AG04450 (cell line): ENCODE measurements at regions of chr1 and their contacts with region 1.

Region 1: DNA sequence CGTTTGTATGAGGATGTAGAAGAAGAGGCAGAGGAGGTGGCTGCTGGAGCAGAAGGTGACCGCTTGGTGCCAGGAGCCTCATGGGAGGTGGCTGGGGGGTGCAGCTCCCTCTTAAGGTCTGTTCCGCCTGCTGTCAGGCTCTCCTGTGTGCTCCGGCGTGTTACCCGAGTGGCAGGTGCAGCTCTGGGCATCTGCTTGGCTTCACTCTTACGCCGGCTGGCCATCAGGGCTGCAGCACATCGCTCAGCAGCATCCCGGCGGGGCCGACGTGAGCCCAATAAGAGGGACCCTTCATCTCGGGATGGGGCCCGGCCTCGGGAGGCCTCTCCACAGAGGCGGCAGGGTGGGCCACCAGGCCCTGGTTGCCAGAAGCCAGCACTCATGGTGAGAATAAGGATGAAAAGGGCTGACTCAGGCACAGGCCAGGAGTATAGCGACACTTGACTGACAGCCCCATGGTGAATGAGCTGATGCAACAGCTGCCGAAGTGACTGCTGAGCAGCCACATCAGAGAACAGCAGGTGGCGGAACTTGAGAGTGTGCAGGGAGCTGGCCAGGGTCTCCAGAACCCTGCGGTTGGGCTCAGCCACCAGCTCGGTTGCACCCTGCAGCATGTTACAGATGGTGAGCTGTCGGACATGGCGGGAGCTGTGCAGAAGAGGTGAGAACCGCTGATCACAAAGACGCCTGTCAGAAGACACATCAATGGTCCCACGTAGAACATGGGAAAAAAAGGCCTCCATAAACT is 17.5 kb downstream of the LRRC41 start:
- DNase-seq: no peak
- H3K4me3 ChIP-seq: no peak overlapping the region
- H3K27ac ChIP-seq: no peak overlapping the region
- H3K27me3 ChIP-seq: no peaks in the 10 kb centered on the region
- CTCF ChIP-seq: no peak

Region 2: GRCh38 chr1:46203738-46204405 is 82.0 kb before region 1 on chr1:
- CTCF ChIA-PET with region 1: no interaction called
- POLR2A ChIA-PET with region 1: no interaction called
- DNase-seq: no peak
- H3K4me3 ChIP-seq: peak overlapping the region; percentile 88
- H3K27ac ChIP-seq: no peak overlapping the region
- H3K27me3 ChIP-seq: no peaks in the 10 kb centered on the region
- CTCF ChIP-seq: no peak

Region 3: DNA sequence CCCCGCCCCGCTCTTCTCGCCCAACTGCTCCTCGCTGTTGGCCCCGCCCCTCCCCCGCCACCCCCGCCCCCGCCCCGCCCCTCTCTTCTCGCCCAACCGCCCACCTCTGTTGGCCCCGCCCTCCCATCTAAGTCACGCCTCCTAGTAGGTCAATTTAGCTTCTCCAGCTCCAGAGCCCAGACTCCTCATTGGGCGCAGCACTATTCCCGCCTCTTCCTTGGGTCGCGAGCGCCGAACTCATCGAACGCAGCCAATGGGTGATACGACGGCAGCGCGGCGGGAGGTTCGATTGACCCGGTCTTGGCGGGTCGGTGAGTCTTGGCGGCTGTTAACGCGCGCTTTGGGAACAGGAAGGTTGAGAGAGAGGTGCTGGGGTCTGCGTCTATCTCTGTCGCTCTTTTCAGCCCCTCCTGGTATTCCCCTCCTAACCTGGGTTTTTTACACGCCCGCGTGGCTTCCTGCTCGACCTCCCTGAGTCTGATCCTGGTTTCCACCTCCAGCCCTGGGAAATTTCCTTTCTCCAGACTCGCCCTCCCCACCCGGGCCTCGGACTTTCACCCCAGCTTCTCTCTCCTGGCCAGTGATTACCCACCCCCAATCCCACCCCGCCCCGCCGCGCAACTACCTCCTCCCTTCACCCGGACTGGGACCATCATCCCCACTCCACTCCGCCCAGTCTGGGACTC is 38.3 kb before region 1 on chr1 and contains the start of gene RAD54L:
- CTCF ChIA-PET with region 1: no interaction called
- POLR2A ChIA-PET with region 1: interaction called, 18 read pairs
- DNase-seq: peak; percentile 98
- H3K4me3 ChIP-seq: peak within 1 kb of the TSS; percentile 92
- H3K27ac ChIP-seq: peak within 1 kb of the TSS; percentile 83
- H3K27me3 ChIP-seq: no peaks in the 10 kb centered on the region
- CTCF ChIP-seq: no peak
- polyA plus RNA-seq, gene RAD54L: 1.8 and 1.9 TPM in 2 replicates

Region 4: DNA sequence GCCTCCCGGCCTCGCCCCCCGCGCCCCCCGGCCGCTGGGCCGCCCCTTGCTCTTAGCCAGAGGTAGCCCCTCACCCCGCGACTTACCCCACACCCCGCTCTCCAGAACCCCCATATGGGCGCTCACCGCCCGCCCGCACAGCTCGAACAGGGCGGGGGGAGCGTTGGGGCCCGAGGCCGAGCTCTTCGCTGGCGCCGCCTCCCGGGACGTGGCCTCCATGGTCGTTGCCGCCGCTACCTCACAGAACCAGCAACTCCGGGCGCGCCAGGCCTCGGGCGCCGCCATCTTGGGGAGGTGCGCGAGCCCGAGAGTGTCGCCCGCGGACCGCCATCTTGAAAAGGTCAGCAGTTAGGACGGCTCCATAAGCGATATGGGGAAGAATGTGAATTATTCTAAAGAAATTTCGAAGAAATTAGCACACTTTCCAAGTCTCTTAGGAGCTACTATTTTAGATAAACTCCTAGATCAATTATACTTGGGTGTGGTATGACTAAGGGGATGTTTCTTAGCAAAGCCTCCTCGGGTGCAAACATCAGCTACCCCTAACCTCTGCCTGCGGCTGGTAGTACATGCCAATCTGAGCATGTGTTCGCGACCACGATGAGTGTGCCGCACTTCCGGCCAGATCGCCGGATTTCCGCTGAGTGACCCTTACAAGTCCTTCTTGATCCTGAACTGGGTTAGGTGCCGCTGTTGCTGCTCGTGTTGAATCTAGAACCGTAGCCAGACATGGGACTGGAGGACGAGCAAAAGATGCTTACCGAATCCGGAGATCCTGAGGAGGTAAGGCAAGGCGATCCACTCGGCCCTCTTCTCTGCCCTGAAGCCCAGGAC is 17.4 kb after region 1 on chr1 and contains the starts of genes LRRC41 and UQCRH:
- CTCF ChIA-PET with region 1: no interaction called
- POLR2A ChIA-PET with region 1: interaction called, 14 read pairs
- DNase-seq: peak; percentile 95
- H3K4me3 ChIP-seq: peak within 1 kb of the TSS; percentile 86
- H3K27ac ChIP-seq: peak within 1 kb of the TSS; percentile 95
- H3K27me3 ChIP-seq: no peaks in the 10 kb centered on the region
- CTCF ChIP-seq: no peak
- polyA plus RNA-seq, gene LRRC41: 66.3 and 80.2 TPM in 2 replicates
- polyA plus RNA-seq, gene UQCRH: 611 and 757 TPM in 2 replicates